GM23248 (cell line): ENCODE measurements at regions of chr17 and their contacts with region 1.

Region 1: GRCh38 chr17:48016112-48016511 is 21.5 kb downstream of the COPZ2 start:
- DNase-seq: peak; percentile 39
- H3K4me3 ChIP-seq: no peak overlapping the region
- H3K27ac ChIP-seq: no peak overlapping the region
- H3K4me1 ChIP-seq: peaks cover 5% of the 10 kb centered on the region; the same call in 1 of the 2 replicates
- H3K27me3 ChIP-seq: no peaks in the 10 kb centered on the region

Region 2: GRCh38 chr17:47978324-47978723 is 37.8 kb before region 1 on chr17:
- in situ Hi-C with region 1: loop called (anchors 5 kb)
- DNase-seq: peak; percentile 78
- H3K4me3 ChIP-seq: no peak overlapping the region
- H3K27ac ChIP-seq: no peak overlapping the region
- H3K4me1 ChIP-seq: no peaks in the 10 kb centered on the region
- H3K27me3 ChIP-seq: no peaks in the 10 kb centered on the region